HCT116 (cell line): ENCODE measurements at regions of chr16 and their contacts with region 1.

Region 1: GRCh38 chr16:71610936-71611871 is 14.8 kb upstream of the MARVELD3 start:
- DNase-seq: peak; percentile 59
- ATAC-seq: peak; percentile 93
- H3K4me3 ChIP-seq: peak overlapping the region; percentile 29 to 43
- H3K27ac ChIP-seq: no peak overlapping the region
- H3K4me1 ChIP-seq: peaks cover 0 to 31% of the 10 kb centered on the region in 2 experiments; a peak in 2 of 4 replicates
- H3K27me3 ChIP-seq: no peaks in the 10 kb centered on the region
- CTCF ChIP-seq: peak; percentile 81 to 89 (median 84)
- POLR2A ChIP-seq: no peak
- RAD21 ChIP-seq: peak; percentile 92

Region 2: GRCh38 chr16:71412270-71413160 is 198.7 kb before region 1 on chr16:
- CTCF ChIA-PET with region 1: interaction called, 26 read pairs
- POLR2A ChIA-PET with region 1: no interaction called
- RAD21 ChIA-PET with region 1: no interaction called
- intact Hi-C with region 1: loop called (anchors 2 kb)
- DNase-seq: peak; percentile 64
- ATAC-seq: peak; percentile 91
- H3K4me3 ChIP-seq: peak overlapping the region; percentile 32 to 49
- H3K27ac ChIP-seq: no peak overlapping the region
- H3K4me1 ChIP-seq: peaks cover 0 to 10% of the 10 kb centered on the region in 2 experiments; a peak in 3 of 4 replicates
- H3K27me3 ChIP-seq: peaks cover 18% of the 10 kb centered on the region
- CTCF ChIP-seq: peak; percentile 66 to 95 (median 78)
- POLR2A ChIP-seq: no peak
- RAD21 ChIP-seq: peak; percentile 87

Region 3: GRCh38 chr16:71537643-71538042 is 73.6 kb before region 1 on chr16:
- CTCF ChIA-PET with region 1: interaction called, 17 read pairs
- POLR2A ChIA-PET with region 1: no interaction called
- RAD21 ChIA-PET with region 1: no interaction called
- intact Hi-C with region 1: no loop called
- DNase-seq: peak; percentile 50
- ATAC-seq: peak; percentile 81
- H3K4me3 ChIP-seq: no peak overlapping the region
- H3K27ac ChIP-seq: no peak overlapping the region
- H3K4me1 ChIP-seq: peaks cover 0 to 6% of the 10 kb centered on the region in 2 experiments; a peak in 1 of 4 replicates
- H3K27me3 ChIP-seq: no peaks in the 10 kb centered on the region
- CTCF ChIP-seq: peak; percentile 68 to 75 (median 70)
- POLR2A ChIP-seq: no peak
- RAD21 ChIP-seq: peak; percentile 87

Region 4: DNA sequence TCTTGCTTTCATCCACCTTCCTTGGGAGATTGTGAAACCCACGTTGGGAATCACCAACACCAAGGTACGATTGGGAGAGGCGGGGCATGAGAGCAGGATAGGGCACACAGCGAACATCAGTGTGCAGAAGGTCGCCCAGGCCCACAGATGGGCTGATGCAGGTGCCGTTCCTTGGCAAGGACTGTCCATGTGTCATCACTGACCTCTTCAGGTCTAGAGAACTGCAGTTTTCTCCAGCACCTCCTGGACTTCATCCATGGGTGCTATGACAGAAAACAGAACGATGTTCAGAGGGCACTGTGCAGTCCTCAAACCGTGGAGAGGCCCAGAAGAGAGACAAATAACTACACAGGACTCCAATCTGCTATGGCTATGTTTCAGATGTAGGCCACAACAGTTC is 10.4 kb before region 1 on chr16:
- CTCF ChIA-PET with region 1: interaction called, 11 read pairs
- POLR2A ChIA-PET with region 1: no interaction called
- RAD21 ChIA-PET with region 1: no interaction called
- intact Hi-C with region 1: no loop called
- DNase-seq: no peak
- ATAC-seq: no peak
- H3K4me3 ChIP-seq: no peak overlapping the region
- H3K27ac ChIP-seq: no peak overlapping the region
- H3K4me1 ChIP-seq: no peaks in the 10 kb centered on the region
- H3K27me3 ChIP-seq: no peaks in the 10 kb centered on the region
- CTCF ChIP-seq: no peak
- POLR2A ChIP-seq: no peak
- RAD21 ChIP-seq: no peak

Region 5: DNA sequence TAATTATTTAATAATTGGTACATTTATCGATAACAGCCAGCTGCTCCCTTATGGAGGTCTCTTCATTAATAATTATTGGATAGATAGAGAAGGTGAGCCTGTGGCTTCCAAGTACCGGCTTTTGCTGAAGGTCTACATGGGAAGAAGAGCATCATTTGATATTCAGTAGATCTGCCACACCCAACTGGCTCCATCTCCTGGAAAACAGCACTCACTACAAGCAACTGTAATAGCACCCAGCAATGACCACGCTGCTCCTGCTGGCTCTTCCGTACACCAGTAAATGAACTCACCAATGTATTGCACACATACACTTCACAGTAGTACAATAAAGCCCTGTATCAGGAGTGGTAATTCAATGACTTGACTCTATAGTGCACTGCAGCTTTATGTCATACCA is 34.2 kb after region 1 on chr16:
- CTCF ChIA-PET with region 1: interaction called, 13 read pairs
- POLR2A ChIA-PET with region 1: no interaction called
- RAD21 ChIA-PET with region 1: no interaction called
- intact Hi-C with region 1: no loop called
- DNase-seq: no peak
- ATAC-seq: peak; percentile 89
- H3K4me3 ChIP-seq: no peak overlapping the region
- H3K27ac ChIP-seq: no peak overlapping the region
- H3K4me1 ChIP-seq: no peaks in the 10 kb centered on the region
- H3K27me3 ChIP-seq: no peaks in the 10 kb centered on the region
- CTCF ChIP-seq: peak; percentile 62 to 69 (median 68)
- POLR2A ChIP-seq: no peak
- RAD21 ChIP-seq: peak; percentile 62

Region 6: DNA sequence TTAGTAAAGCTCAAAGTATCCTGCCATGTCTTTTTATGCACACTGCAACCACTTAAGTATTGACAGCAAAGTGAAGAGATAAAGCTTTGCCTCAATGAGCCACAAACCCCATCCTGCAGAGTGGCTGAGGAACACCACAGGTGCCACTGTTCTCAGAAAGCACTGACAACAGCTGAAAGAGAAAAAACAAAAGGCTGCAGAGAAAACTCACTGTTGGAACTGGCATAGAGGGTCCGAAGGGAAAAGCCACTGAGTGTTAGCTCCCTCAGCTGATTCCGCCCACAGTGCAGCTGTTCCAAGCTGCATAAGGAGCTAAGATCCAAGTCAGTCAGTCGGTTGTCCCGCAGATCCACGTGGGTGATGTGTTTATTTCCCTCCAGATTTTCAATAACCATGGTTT is 65.0 kb after region 1 on chr16:
- CTCF ChIA-PET with region 1: no interaction called
- POLR2A ChIA-PET with region 1: no interaction called
- RAD21 ChIA-PET with region 1: no interaction called
- intact Hi-C with region 1: no loop called
- DNase-seq: no peak
- ATAC-seq: no peak
- H3K4me3 ChIP-seq: no peak overlapping the region
- H3K27ac ChIP-seq: no peak overlapping the region
- H3K4me1 ChIP-seq: no peaks in the 10 kb centered on the region
- H3K27me3 ChIP-seq: no peaks in the 10 kb centered on the region
- CTCF ChIP-seq: no peak
- POLR2A ChIP-seq: no peak
- RAD21 ChIP-seq: no peak